Activated B cell treated with CpG ODN at 0.5 μM for 24 hours (primary cell): ENCODE measurements at regions of chr10 and their contacts with region 1.

Region 1: GRCh38 chr10:29998142-29998808 is 61.1 kb downstream of the JCAD start:
- DNase-seq: peak; percentile 32
- ATAC-seq: peak; percentile 75
- H3K4me3 Mint-ChIP-seq: no peak overlapping the region
- H3K27ac Mint-ChIP-seq: no peak overlapping the region
- H3K4me1 Mint-ChIP-seq: no peaks in the 10 kb centered on the region
- H3K27me3 Mint-ChIP-seq: peaks cover 31% of the 10 kb centered on the region
- CTCF ChIP-seq: peak; percentile 43

Region 2: GRCh38 chr10:29804025-29804852 is 194.0 kb before region 1 on chr10:
- CTCF ChIA-PET with region 1: no interaction called
- POLR2A ChIA-PET with region 1: no interaction called
- intact Hi-C with region 1: no loop called
- DNase-seq: no peak
- ATAC-seq: no peak
- H3K4me3 Mint-ChIP-seq: no peak overlapping the region
- H3K27ac Mint-ChIP-seq: no peak overlapping the region
- H3K4me1 Mint-ChIP-seq: no peaks in the 10 kb centered on the region
- H3K27me3 Mint-ChIP-seq: peaks cover 1% of the 10 kb centered on the region
- CTCF ChIP-seq: no peak

Region 3: DNA sequence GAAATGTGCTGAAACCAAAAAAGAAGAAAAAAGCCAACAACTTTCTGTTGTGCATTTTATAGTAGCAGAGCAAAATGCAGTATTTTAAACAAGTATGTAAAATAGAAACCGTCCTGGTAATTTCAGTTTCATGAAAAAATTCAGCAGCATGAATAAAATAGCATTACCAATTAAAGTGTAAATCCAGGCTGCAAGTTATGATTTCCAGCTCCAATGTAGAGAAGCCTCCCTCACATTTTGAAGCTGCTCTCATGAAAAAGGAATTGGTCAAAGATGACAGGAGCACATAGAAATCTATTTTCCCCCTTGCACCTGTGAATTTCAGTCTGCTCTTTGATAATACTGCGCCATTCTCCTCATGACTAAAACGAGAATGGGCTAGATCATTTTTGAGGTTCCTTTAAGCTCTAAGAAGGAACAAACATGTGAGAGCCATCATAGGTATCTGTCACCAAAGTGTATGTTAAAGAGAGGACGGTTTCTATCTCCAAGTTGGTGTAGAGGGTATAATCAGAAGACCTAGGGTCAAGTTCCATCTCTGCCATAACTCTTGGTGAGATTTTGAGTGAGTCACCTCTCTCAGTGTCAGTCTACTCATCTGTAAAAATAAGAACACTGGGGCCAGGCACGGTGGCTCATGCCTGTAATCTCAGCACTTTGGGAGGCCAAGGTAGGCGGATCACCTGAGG is 243.3 kb after region 1 on chr10:
- CTCF ChIA-PET with region 1: no interaction called
- POLR2A ChIA-PET with region 1: no interaction called
- intact Hi-C with region 1: loop called (anchors 5 kb)
- DNase-seq: no peak
- ATAC-seq: no peak
- H3K4me3 Mint-ChIP-seq: no peak overlapping the region
- H3K27ac Mint-ChIP-seq: no peak overlapping the region
- H3K4me1 Mint-ChIP-seq: no peaks in the 10 kb centered on the region
- H3K27me3 Mint-ChIP-seq: peaks cover 3% of the 10 kb centered on the region
- CTCF ChIP-seq: no peak

Region 4: DNA sequence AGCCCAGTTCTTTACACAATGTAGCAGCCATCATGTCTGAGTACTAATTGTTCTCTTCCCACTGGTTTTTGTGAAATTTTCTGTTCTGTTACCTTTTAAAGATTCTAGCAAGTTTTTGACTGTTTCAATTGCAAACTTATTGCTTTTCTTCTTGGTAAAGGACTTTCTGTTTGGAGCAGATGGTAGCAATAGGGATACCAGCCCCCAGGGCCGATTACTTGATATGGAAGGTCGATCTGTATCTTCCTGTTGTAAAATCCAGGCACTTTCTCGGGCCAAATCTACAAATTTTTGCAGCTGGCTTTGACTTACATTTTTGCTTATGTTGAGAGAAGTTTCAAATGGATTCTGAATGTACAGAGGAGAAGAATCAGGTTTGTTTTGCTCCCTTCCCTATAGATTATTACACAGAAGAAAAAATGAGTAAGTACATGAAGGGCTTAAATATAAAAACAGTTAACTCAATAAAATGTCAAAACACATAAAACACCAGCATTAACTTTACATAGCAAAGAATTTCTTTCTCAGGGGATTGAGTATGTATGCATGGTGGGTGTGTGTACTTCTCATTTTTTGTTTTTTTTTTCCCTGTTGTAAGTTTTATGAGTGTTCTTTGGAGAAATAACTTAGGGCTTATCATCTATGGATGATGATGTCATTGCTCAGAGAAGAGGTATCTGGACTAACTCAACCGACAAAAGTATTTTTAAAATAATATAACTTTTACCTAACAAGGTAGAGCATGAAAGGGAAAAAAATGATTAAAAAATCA is 315.5 kb after region 1 on chr10:
- CTCF ChIA-PET with region 1: no interaction called
- POLR2A ChIA-PET with region 1: no interaction called
- intact Hi-C with region 1: loop called (anchors 10 kb)
- DNase-seq: no peak
- ATAC-seq: no peak
- H3K4me3 Mint-ChIP-seq: no peak overlapping the region
- H3K27ac Mint-ChIP-seq: no peak overlapping the region
- H3K4me1 Mint-ChIP-seq: no peaks in the 10 kb centered on the region
- H3K27me3 Mint-ChIP-seq: no peaks in the 10 kb centered on the region
- CTCF ChIP-seq: no peak